ENCODE measurements at regions of chr10 and their contacts with region 1.

Region 1: DNA sequence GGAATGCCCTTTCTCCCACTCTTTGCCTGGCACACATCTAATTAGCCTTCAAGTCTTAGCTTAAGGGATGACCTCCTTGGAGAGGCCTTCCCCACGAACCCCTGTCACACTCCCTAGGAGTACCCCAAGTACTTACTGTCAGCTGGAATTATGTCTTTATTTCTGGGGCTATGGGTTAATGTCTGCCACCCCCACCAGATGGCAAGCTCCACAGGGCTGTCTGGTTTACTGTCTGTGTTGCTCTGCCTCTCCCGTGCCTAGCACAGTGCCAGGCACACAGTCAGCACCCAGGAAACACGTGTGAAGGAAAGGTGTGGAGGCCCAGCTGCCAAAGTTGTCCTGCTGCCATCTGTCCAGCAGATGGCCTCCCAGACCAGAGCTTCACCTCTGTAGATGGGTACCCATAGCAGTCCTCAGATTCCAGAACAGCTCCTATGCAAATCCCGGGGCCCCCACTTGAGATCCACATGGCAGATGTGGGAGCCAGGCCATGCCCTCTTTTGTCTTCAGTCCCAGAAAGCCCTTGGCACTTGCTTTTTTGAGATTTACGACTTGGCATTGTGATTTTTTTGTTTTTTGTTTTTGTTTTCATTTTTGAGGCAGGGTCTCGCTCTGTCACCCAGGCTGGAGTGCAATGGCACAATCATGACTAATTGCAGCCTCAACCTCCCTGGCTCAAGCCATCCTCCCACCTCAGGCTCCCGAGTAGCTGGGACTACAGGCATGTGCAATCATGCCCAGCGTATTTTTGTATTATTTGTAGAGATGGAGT is 17.2 kb upstream of the PALD1 start:
- DNase-seq: peak; percentile 34
- H3K4me3 ChIP-seq: no peak overlapping the region
- CTCF ChIP-seq: peak; percentile 95

Region 2: DNA sequence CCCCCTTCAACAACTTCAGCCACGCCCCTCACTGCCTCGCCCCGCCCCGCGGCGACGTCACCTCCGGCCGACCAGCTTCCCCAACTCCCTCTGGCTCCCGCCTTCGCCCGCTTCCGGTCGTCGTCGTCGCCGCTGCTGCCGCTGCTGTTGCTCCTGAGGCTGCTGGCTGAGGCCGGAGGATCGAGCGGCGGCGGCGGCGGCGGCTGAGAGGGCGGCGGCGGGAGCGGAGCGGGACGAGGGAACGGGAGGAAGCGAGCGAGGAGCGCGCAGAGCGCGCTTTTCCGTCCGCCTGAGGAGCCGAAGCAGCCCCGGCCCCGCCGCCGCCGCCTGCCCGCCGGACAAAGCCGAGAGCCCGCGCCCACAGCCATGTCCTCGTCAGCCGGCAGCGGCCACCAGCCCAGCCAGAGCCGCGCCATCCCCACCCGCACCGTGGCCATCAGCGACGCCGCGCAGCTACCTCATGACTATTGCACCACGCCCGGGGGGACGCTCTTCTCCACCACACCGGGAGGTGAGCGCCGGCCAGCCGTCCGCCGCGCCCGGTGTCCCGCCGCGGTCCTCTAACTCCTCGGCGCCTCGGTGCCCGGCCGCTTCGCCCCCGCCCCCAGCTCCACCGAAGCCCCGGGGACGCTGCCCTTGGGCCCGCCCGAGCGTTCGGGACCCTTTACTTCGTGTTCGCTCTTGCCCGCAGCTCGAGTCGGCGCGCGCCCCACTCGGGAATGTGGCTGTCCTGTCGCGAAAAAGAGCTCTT is 57.2 kb before region 1 on chr10 and contains the start of gene EIF4EBP2:
- in situ Hi-C with region 1: no loop called
- DNase-seq: peak; percentile 91
- H3K4me3 ChIP-seq: peak within 1 kb of the TSS; percentile 93
- CTCF ChIP-seq: no peak

Region 3: GRCh38 chr10:70430493-70431445 is 30.6 kb before region 1 on chr10:
- in situ Hi-C with region 1: no loop called
- DNase-seq: no peak
- H3K4me3 ChIP-seq: no peak overlapping the region
- CTCF ChIP-seq: no peak

Region 4: GRCh38 chr10:70758757-70759514 is 297.5 kb after region 1 on chr10:
- in situ Hi-C with region 1: loop called (anchors 25 kb)
- DNase-seq: peak; percentile 70
- H3K4me3 ChIP-seq: no peak overlapping the region
- CTCF ChIP-seq: peak; percentile 73

Region 5: GRCh38 chr10:70849582-70850016 is 388.2 kb after region 1 on chr10:
- in situ Hi-C with region 1: no loop called
- DNase-seq: peak; percentile 85
- H3K4me3 ChIP-seq: no peak overlapping the region
- CTCF ChIP-seq: no peak

Measured in astrocyte of the cerebellum (primary cell).